T-cell (primary cell): ENCODE measurements at regions of chr4 and their contacts with region 1.

Region 1: DNA sequence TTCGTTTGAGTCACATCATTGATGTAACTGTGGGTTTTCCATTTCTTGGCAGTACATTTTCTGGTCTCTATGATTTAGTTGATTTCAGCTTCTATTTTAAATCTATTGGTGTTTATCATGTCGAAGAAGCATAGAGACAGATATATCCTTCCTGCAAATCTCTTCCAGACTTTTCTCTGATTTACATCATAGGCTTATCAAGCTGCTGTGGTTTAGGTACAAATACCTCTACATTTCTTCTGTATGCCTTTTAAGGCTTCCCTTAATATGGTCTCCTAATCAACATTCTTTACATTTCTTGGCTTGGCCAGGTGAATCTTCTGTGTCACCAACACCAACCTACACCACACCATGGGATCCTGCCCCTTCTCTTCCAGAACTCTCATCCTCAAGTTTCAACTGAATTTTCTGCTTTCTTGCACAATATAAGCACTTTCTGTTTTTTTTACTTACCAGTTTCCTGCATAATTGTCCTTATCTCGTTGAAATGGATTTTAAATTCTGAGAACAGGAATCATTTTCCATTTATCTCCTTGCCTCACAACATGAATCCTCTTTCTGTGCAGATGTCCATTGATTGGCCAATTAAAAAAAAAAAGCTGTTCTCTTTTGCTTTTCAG is 626.9 kb downstream of the ANKRD50 start:
- DNase-seq: no peak
- ATAC-seq: no peak
- H3K4me3 ChIP-seq: no peak overlapping the region
- H3K4me3 Mint-ChIP-seq: no peak overlapping the region
- H3K27ac ChIP-seq: no peak overlapping the region
- H3K27ac Mint-ChIP-seq: no peak overlapping the region
- H3K4me1 ChIP-seq: no peaks in the 10 kb centered on the region
- H3K4me1 Mint-ChIP-seq: no peaks in the 10 kb centered on the region
- H3K27me3 ChIP-seq: no peaks in the 10 kb centered on the region
- H3K27me3 Mint-ChIP-seq: no peaks in the 10 kb centered on the region

Region 2: DNA sequence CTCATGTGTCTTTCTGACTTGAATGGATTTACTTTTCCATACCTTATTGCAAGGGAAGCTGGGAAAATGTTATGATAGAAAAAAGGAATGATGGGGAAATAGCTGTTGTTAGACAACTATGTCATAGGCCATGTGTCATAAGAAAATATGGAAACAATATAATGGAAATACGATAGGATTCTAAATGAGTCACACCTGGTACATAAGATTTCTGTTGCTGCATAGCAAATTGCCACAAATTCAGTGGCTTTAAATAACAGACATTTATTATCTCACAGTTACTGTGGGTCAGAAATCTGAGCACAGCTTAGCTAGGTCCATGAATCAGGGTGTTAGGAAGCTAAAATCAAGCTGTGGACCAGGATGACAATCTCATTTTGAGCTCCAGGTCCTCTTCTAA is 671.5 kb after region 1 on chr4:
- CTCF ChIA-PET with region 1: no interaction called
- POLR2A ChIA-PET with region 1: interaction called in 1 of 2 experiments, 11 read pairs
- DNase-seq: no peak
- ATAC-seq: no peak
- H3K4me3 ChIP-seq: no peak overlapping the region
- H3K4me3 Mint-ChIP-seq: no peak overlapping the region
- H3K27ac ChIP-seq: no peak overlapping the region
- H3K27ac Mint-ChIP-seq: no peak overlapping the region
- H3K4me1 ChIP-seq: no peaks in the 10 kb centered on the region
- H3K4me1 Mint-ChIP-seq: no peaks in the 10 kb centered on the region
- H3K27me3 ChIP-seq: no peaks in the 10 kb centered on the region
- H3K27me3 Mint-ChIP-seq: peaks cover 0 to 3% of the 10 kb centered on the region in 2 donors